ENCODE measurements at regions of chr9 and their contacts with region 1.

Region 1: GRCh38 chr9:89179895-89180667 is 1.5 kb upstream of the SHC3 start:
- DNase-seq: peak; percentile 91
- ATAC-seq: peak; percentile 94

Region 2: DNA sequence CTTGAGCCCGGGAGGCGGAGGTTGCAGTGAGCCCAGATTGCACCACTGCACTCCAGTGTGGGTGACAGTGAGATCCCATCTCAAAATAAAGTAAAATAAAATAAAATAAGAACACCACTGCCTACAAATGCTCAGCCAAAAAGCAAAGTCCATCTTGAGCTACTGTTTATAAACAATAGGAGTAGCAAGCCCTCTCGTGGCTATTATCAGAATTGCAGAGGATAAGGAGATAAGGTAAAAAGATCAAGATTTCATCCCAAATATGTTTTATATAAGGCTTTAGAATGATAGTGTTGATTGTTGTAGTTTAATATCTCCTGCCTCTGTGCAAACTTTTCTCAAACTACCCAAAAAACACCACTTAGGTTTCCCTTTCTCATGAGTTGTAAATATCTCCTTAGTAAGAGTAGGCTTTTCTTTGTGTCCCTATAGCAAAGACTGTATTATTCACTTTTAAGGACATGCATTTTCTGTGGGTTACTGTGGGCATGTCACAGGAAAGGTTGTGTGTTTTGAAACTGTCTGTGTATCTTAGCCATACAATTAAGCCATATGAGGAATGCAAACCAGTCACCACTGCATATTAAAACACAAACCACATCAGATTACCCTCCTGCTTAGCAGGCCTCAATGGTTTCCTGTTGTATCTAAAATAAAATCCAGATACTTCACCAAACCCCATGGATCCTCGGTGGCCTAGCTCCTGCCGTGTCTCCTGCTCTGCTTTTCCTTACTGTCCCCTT is 99.1 kb after region 1 on chr9:
- intact Hi-C with region 1: loop called (anchors 10 kb)
- DNase-seq: no peak
- ATAC-seq: no peak

Region 3: GRCh38 chr9:89309608-89310474 is 129.8 kb after region 1 on chr9:
- intact Hi-C with region 1: loop called (anchors 10 kb)
- DNase-seq: no peak
- ATAC-seq: no peak

Region 4: GRCh38 chr9:89405826-89406225 is 225.7 kb after region 1 on chr9:
- intact Hi-C with region 1: no loop called
- DNase-seq: no peak
- ATAC-seq: peak; percentile 61